ENCODE measurements at regions of chr1 and their contacts with region 1.

Region 1: GRCh38 chr1:93437976-93438605 is 9.8 kb upstream of the FNBP1L start:
- DNase-seq: no peak
- ATAC-seq: peak; percentile 42 to 71 (median 46)
- H3K4me3 ChIP-seq: no peak overlapping the region
- H3K27ac ChIP-seq: no peak overlapping the region
- H3K4me1 ChIP-seq: peaks cover 0 to 7% (median 0%) of the 10 kb centered on the region in 12 donors
- H3K27me3 ChIP-seq: no peaks in the 10 kb centered on the region
- CTCF ChIP-seq: peak; percentile 63 to 82 (median 72)
- POLR2A ChIP-seq: no peak

Region 2: GRCh38 chr1:92968138-92969032 is 469.7 kb before region 1 on chr1:
- intact Hi-C with region 1: no loop called
- DNase-seq: no peak
- ATAC-seq: no peak
- H3K4me3 ChIP-seq: no peak overlapping the region
- H3K27ac ChIP-seq: no peak overlapping the region
- H3K4me1 ChIP-seq: peaks cover 0 to 32% (median 10%) of the 10 kb centered on the region in 12 donors
- H3K27me3 ChIP-seq: no peaks in the 10 kb centered on the region
- CTCF ChIP-seq: peak in 10 of 12 donors; percentile 12 to 48 (median 36)
- POLR2A ChIP-seq: no peak

Region 3: DNA sequence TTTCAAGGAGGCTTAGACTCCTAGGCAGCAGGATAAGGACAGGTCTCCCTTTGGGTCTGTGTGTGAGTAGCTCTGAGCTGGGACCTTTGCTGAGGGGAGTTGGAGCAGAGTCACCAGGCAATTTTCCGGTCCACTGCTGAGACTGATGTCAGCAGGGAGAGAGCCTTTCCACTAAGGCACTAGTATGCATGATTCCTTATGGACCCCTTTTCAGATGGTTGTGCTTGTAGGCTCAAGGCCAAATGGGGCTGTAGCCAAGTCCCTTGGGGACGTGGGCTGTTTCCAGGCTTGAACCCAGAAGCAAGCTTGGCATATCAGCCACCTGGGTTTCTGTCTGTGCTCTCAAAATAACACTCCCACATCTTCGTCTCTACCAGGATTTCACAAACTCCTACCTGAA is 184.6 kb before region 1 on chr1:
- intact Hi-C with region 1: no loop called
- DNase-seq: no peak
- ATAC-seq: no peak
- H3K4me3 ChIP-seq: no peak overlapping the region
- H3K27ac ChIP-seq: no peak overlapping the region
- H3K4me1 ChIP-seq: no peaks in the 10 kb centered on the region
- H3K27me3 ChIP-seq: no peaks in the 10 kb centered on the region
- CTCF ChIP-seq: no peak
- POLR2A ChIP-seq: no peak

Region 4: GRCh38 chr1:93814059-93814794 is 376.1 kb after region 1 on chr1:
- intact Hi-C with region 1: loop called in 9 of 10 experiments (anchors 2 to 10 kb)
- DNase-seq: peak in 4 of 5 donors; percentile 51 to 70 (median 59)
- ATAC-seq: peak; percentile 65 to 84 (median 77)
- H3K4me3 ChIP-seq: no peak overlapping the region
- H3K27ac ChIP-seq: no peak overlapping the region
- H3K4me1 ChIP-seq: peaks cover 0 to 57% (median 31%) of the 10 kb centered on the region in 12 donors
- H3K27me3 ChIP-seq: no peaks in the 10 kb centered on the region
- CTCF ChIP-seq: peak; percentile 94 to 100 (median 97)
- POLR2A ChIP-seq: no peak

Region 5: GRCh38 chr1:93827128-93827527 is 389.0 kb after region 1 on chr1:
- intact Hi-C with region 1: no loop called
- DNase-seq: no peak
- ATAC-seq: no peak
- H3K4me3 ChIP-seq: no peak overlapping the region
- H3K27ac ChIP-seq: no peak overlapping the region
- H3K4me1 ChIP-seq: no peaks in the 10 kb centered on the region
- H3K27me3 ChIP-seq: no peaks in the 10 kb centered on the region
- CTCF ChIP-seq: no peak
- POLR2A ChIP-seq: no peak

Measured in heart left ventricle (tissue), 16 donors.